ENCODE measurements at regions of chr9 and their contacts with region 1.

Region 1: GRCh38 chr9:113401027-113401792 is at the start of gene ALAD:
- DNase-seq: peak; percentile 99
- ATAC-seq: peak; percentile 99
- H3K4me3 ChIP-seq: peak within 1 kb of the TSS; percentile 60 to 98 (median 82)
- H3K4me3 Mint-ChIP-seq: peak within 1 kb of the TSS; percentile 98
- H3K27ac ChIP-seq: peak within 1 kb of the TSS; percentile 18 to 73
- H3K27ac Mint-ChIP-seq: peak within 1 kb of the TSS; percentile 93
- H3K4me1 ChIP-seq: peaks cover 10 to 18% of the 10 kb centered on the region in 2 donors
- H3K4me1 Mint-ChIP-seq: peaks cover 28% of the 10 kb centered on the region
- H3K27me3 ChIP-seq: no peaks in the 10 kb centered on the region
- H3K27me3 Mint-ChIP-seq: no peaks in the 10 kb centered on the region
- CTCF ChIP-seq: peak; percentile 93
- total RNA-seq, gene ALAD: 39.8 and 40.1 TPM in 2 replicates

Region 2: GRCh38 chr9:113221003-113221799 is 180.0 kb before region 1 on chr9 and contains the starts of genes FKBP15 and SLC31A1:
- CTCF ChIA-PET with region 1: interaction called, 3 read pairs
- POLR2A ChIA-PET with region 1: no interaction called
- intact Hi-C with region 1: loop called (anchors 2 kb)
- DNase-seq: peak; percentile 98
- ATAC-seq: peak; percentile 98
- H3K4me3 ChIP-seq: peak within 1 kb of the TSS; percentile 77 to 97 (median 94)
- H3K4me3 Mint-ChIP-seq: peak within 1 kb of the TSS; percentile 95
- H3K27ac ChIP-seq: peak within 1 kb of the TSS; percentile 59 to 84
- H3K27ac Mint-ChIP-seq: peak within 1 kb of the TSS; percentile 95
- H3K4me1 ChIP-seq: peaks cover 33 to 35% of the 10 kb centered on the region in 2 donors
- H3K4me1 Mint-ChIP-seq: peaks cover 48% of the 10 kb centered on the region
- H3K27me3 ChIP-seq: no peaks in the 10 kb centered on the region
- H3K27me3 Mint-ChIP-seq: no peaks in the 10 kb centered on the region
- CTCF ChIP-seq: no peak
- total RNA-seq, gene FKBP15: 40.6 and 41.2 TPM in 2 replicates
- total RNA-seq, gene SLC31A1: 3.2 and 3.5 TPM in 2 replicates

Region 3: DNA sequence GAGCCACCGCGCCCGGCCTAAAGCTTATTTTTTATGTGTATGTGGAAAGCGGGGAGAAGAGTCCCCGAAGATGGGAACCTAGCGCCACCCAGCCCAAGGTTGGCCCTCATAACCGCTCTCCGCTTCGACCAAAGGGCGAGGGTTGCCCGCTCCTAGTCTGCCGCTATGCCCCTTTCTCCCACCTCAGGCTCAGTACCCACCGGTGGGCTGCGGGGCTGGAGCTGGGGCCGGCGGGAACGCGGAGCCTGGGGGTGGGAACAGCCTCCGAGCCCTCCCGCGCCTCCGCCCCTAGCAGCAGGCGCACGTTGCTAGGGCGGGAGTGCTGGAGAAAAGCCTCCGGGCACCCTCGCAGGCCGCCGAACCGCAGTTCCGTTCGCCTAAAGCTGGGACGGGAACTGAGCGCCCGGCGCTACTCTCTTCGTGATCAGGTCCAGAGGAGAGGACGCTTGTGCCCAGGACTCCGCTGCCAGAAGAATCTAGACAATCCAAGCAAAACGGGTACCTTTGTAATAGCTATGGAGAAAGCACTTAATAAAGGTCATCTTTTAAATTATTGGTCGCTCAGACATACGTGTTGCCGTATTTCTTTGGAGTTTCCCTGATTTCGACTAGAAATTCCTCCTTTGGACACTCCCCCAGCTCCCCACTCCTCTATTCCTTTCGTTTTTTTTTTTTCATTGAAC is 61.1 kb before region 1 on chr9 and contains the start of gene WDR31:
- CTCF ChIA-PET with region 1: interaction called, 8 read pairs
- POLR2A ChIA-PET with region 1: no interaction called
- intact Hi-C with region 1: loop called (anchors 1 kb)
- DNase-seq: peak; percentile 84
- ATAC-seq: peak; percentile 97
- H3K4me3 ChIP-seq: peak within 1 kb of the TSS; percentile 42 to 85 (median 73)
- H3K4me3 Mint-ChIP-seq: peak within 1 kb of the TSS; percentile 90
- H3K27ac ChIP-seq: peak within 1 kb of the TSS in 1 of 2 donors; percentile 41
- H3K27ac Mint-ChIP-seq: peak within 1 kb of the TSS; percentile 84
- H3K4me1 ChIP-seq: peaks cover 8 to 12% of the 10 kb centered on the region in 2 donors
- H3K4me1 Mint-ChIP-seq: peaks cover 16% of the 10 kb centered on the region
- H3K27me3 ChIP-seq: no peaks in the 10 kb centered on the region
- H3K27me3 Mint-ChIP-seq: peaks cover 8% of the 10 kb centered on the region
- CTCF ChIP-seq: no peak
- total RNA-seq, gene WDR31: 0.62 and 1.0 TPM in 2 replicates

Region 4: GRCh38 chr9:113446323-113446740 is 45.1 kb after region 1 on chr9:
- CTCF ChIA-PET with region 1: interaction called, 5 read pairs
- POLR2A ChIA-PET with region 1: no interaction called
- intact Hi-C with region 1: loop called (anchors 2 kb)
- DNase-seq: peak; percentile 58
- ATAC-seq: no peak
- H3K4me3 ChIP-seq: no peak overlapping the region
- H3K4me3 Mint-ChIP-seq: no peak overlapping the region
- H3K27ac ChIP-seq: no peak overlapping the region
- H3K27ac Mint-ChIP-seq: no peak overlapping the region
- H3K4me1 ChIP-seq: no peaks in the 10 kb centered on the region
- H3K4me1 Mint-ChIP-seq: no peaks in the 10 kb centered on the region
- H3K27me3 ChIP-seq: no peaks in the 10 kb centered on the region
- H3K27me3 Mint-ChIP-seq: no peaks in the 10 kb centered on the region
- CTCF ChIP-seq: peak; percentile 80

Region 5: DNA sequence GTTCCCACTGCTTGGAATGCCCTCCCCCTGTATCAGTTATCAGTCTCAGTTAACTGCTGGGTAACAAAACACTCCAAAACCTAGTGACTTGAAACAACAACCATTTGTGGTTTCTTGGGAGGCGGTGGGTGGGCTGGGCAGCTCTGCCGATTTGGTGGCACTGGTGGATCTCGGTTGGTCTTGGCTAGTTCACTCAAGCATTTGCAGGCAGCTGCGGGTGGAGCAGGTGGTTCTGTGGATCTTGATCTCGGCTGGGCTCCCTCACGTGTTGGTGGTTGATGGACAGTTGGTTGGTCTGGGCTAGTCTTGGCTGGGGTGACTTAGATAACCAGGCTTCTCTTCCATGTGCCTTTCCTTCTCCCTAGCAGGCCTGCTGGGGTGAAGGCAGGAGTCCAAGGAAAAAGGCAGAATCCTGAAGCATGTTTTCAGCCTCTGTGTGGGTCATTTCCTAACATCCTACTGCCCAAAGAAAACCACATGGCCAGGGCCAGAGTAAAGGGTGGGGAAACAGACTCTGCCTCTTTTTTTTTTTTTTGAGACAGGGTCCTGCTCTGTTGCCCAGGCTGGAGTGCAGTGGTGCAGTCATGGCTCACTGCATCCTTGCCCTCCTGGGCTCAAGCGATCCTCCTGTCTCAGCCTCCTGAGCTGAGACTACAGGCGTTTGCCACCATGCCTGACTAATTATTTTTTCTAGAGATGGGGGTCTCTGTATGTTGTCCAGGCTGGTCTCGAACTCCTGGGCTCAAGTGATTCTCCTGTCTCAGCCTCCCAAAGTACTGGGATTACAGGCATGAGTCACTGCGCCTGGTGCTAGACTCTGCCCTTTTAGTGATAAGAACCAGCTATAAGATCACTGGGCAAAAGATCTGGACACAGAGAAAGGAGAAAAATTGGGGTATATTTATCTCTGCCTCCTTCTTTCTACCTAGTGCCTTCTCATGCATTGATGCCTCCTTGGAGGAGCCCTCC is 246.0 kb after region 1 on chr9:
- CTCF ChIA-PET with region 1: no interaction called
- POLR2A ChIA-PET with region 1: no interaction called
- intact Hi-C with region 1: no loop called
- DNase-seq: no peak
- ATAC-seq: no peak
- H3K4me3 ChIP-seq: no peak overlapping the region
- H3K4me3 Mint-ChIP-seq: no peak overlapping the region
- H3K27ac ChIP-seq: no peak overlapping the region
- H3K27ac Mint-ChIP-seq: no peak overlapping the region
- H3K4me1 ChIP-seq: no peaks in the 10 kb centered on the region
- H3K4me1 Mint-ChIP-seq: no peaks in the 10 kb centered on the region
- H3K27me3 ChIP-seq: peaks cover 0 to 6% (median 2%) of the 10 kb centered on the region in 4 experiments
- H3K27me3 Mint-ChIP-seq: peaks cover 17% of the 10 kb centered on the region
- CTCF ChIP-seq: no peak

Region 6: GRCh38 chr9:113720495-113720894 is 319.3 kb after region 1 on chr9:
- CTCF ChIA-PET with region 1: no interaction called
- POLR2A ChIA-PET with region 1: no interaction called
- intact Hi-C with region 1: no loop called
- DNase-seq: no peak
- ATAC-seq: no peak
- H3K4me3 ChIP-seq: no peak overlapping the region
- H3K4me3 Mint-ChIP-seq: no peak overlapping the region
- H3K27ac ChIP-seq: no peak overlapping the region
- H3K27ac Mint-ChIP-seq: no peak overlapping the region
- H3K4me1 ChIP-seq: no peaks in the 10 kb centered on the region
- H3K4me1 Mint-ChIP-seq: no peaks in the 10 kb centered on the region
- H3K27me3 ChIP-seq: peaks cover 0 to 7% (median 0%) of the 10 kb centered on the region in 4 experiments
- H3K27me3 Mint-ChIP-seq: peaks cover 8% of the 10 kb centered on the region
- CTCF ChIP-seq: no peak

Measured in B cell (primary cell).